Activated CD8-positive, alpha-beta T cell treated with anti-CD3 and anti-CD28 coated beads for 36 hours (primary cell): ENCODE measurements at regions of chr7 and their contacts with region 1.

Region 1: GRCh38 chr7:91089382-91089963 is 174.8 kb upstream of the FZD1 start:
- DNase-seq: peak; percentile 8
- ATAC-seq: peak; percentile 51
- H3K4me3 Mint-ChIP-seq: peak overlapping the region; percentile 7
- H3K27ac Mint-ChIP-seq: no peak overlapping the region
- H3K4me1 Mint-ChIP-seq: peaks cover 16% of the 10 kb centered on the region
- H3K27me3 Mint-ChIP-seq: peaks cover 2% of the 10 kb centered on the region
- CTCF ChIP-seq: peak; percentile 85

Region 2: GRCh38 chr7:91020636-91021385 is 68.7 kb before region 1 on chr7:
- CTCF ChIA-PET with region 1: no interaction called
- POLR2A ChIA-PET with region 1: no interaction called
- intact Hi-C with region 1: no loop called
- DNase-seq: no peak
- ATAC-seq: no peak
- H3K4me3 Mint-ChIP-seq: no peak overlapping the region
- H3K27ac Mint-ChIP-seq: no peak overlapping the region
- H3K4me1 Mint-ChIP-seq: no peaks in the 10 kb centered on the region
- H3K27me3 Mint-ChIP-seq: no peaks in the 10 kb centered on the region
- CTCF ChIP-seq: no peak

Region 3: DNA sequence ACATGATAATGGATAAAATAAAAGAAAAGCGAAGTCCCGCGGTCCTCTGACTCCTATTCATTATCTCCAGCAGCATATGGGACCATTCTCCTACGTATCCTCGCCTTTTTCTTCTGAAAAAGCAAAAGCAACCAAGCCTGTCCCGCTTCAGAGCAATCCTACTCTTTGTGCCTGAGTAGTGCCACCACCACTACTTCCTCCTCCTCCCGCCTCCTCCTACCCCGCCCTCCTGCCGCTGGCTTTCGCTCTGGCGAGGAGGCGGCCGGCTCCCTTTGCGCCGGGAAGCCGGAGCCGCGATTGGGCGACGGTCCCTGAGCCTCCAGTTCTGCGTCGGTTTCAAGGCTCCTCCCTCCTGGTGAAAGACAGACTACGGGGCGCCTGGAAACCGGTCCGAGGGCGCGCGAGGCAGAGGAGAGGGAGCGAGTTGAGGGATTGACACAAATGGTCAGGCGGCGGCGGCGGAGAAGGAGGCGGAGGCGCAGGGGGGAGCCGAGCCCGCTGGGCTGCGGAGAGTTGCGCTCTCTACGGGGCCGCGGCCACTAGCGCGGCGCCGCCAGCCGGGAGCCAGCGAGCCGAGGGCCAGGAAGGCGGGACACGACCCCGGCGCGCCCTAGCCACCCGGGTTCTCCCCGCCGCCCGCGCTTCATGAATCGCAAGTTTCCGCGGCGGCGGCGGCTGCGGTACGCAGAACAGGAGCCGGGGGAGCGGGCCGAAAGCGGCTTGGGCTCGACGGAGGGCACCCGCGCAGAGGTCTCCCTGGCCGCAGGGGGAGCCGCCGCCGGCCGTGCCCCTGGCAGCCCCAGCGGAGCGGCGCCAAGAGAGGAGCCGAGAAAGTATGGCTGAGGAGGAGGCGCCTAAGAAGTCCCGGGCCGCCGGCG is 174.8 kb after region 1 on chr7 and contains the start of gene FZD1:
- CTCF ChIA-PET with region 1: no interaction called
- POLR2A ChIA-PET with region 1: no interaction called
- intact Hi-C with region 1: loop called (anchors 10 kb)
- DNase-seq: peak; percentile 73
- ATAC-seq: peak; percentile 90
- H3K4me3 Mint-ChIP-seq: peak within 1 kb of the TSS; percentile 71
- H3K27ac Mint-ChIP-seq: no peak within 1 kb of the TSS
- H3K4me1 Mint-ChIP-seq: peaks cover 3% of the 10 kb centered on the region
- H3K27me3 Mint-ChIP-seq: peaks cover 54% of the 10 kb centered on the region
- CTCF ChIP-seq: no peak
- total RNA-seq, gene FZD1: 0.16 to 0.20 TPM

Region 4: GRCh38 chr7:91367812-91368578 is 278.5 kb after region 1 on chr7:
- CTCF ChIA-PET with region 1: no interaction called
- POLR2A ChIA-PET with region 1: no interaction called
- intact Hi-C with region 1: no loop called
- DNase-seq: no peak
- ATAC-seq: no peak
- H3K4me3 Mint-ChIP-seq: no peak overlapping the region
- H3K27ac Mint-ChIP-seq: no peak overlapping the region
- H3K4me1 Mint-ChIP-seq: no peaks in the 10 kb centered on the region
- H3K27me3 Mint-ChIP-seq: no peaks in the 10 kb centered on the region
- CTCF ChIP-seq: no peak

Region 5: DNA sequence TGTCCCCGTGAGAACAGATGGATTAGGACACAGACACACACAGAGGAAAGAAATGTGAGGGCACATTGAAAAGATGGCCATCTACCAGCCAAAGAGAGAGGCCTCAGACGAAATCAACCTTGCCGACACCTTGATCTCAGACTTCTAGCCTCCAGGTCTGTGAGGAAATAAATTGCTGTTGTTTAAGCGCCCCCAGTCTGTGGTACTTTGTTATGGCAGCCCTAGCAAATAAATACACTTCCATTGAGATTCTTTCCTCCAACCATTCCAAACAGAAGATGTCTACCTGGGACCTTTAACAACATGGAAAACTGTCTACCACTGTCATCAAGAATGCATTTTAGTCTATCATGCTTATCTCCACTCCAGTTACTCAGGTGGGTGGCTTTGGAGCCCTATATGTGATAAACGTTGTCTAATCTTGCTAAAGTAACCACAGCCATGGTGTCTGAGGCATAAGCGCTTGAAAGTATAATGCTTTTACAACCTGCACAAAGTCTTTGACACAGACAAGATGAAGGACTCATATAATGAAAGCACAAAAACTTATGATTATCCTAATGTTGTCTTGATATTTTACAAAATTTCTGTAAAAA is 546.8 kb after region 1 on chr7:
- CTCF ChIA-PET with region 1: no interaction called
- POLR2A ChIA-PET with region 1: no interaction called
- intact Hi-C with region 1: loop called (anchors 10 kb)
- DNase-seq: peak; percentile 4
- ATAC-seq: no peak
- H3K4me3 Mint-ChIP-seq: no peak overlapping the region
- H3K27ac Mint-ChIP-seq: no peak overlapping the region
- H3K4me1 Mint-ChIP-seq: no peaks in the 10 kb centered on the region
- H3K27me3 Mint-ChIP-seq: no peaks in the 10 kb centered on the region
- CTCF ChIP-seq: peak; percentile 26

Region 6: GRCh38 chr7:91880413-91881241 is 791.2 kb after region 1 on chr7 and contains the start of gene MTERF1:
- CTCF ChIA-PET with region 1: no interaction called
- POLR2A ChIA-PET with region 1: no interaction called
- intact Hi-C with region 1: loop called (anchors 10 kb)
- DNase-seq: peak; percentile 97
- ATAC-seq: peak; percentile 96
- H3K4me3 Mint-ChIP-seq: peak within 1 kb of the TSS; percentile 88
- H3K27ac Mint-ChIP-seq: peak within 1 kb of the TSS; percentile 98
- H3K4me1 Mint-ChIP-seq: peaks cover 29% of the 10 kb centered on the region
- H3K27me3 Mint-ChIP-seq: no peaks in the 10 kb centered on the region
- CTCF ChIP-seq: peak; percentile 94
- total RNA-seq, gene MTERF1: 15.9 to 16.9 TPM